HCT116 (cell line): ENCODE measurements at regions of chr20 and their contacts with region 1.

Region 1: DNA sequence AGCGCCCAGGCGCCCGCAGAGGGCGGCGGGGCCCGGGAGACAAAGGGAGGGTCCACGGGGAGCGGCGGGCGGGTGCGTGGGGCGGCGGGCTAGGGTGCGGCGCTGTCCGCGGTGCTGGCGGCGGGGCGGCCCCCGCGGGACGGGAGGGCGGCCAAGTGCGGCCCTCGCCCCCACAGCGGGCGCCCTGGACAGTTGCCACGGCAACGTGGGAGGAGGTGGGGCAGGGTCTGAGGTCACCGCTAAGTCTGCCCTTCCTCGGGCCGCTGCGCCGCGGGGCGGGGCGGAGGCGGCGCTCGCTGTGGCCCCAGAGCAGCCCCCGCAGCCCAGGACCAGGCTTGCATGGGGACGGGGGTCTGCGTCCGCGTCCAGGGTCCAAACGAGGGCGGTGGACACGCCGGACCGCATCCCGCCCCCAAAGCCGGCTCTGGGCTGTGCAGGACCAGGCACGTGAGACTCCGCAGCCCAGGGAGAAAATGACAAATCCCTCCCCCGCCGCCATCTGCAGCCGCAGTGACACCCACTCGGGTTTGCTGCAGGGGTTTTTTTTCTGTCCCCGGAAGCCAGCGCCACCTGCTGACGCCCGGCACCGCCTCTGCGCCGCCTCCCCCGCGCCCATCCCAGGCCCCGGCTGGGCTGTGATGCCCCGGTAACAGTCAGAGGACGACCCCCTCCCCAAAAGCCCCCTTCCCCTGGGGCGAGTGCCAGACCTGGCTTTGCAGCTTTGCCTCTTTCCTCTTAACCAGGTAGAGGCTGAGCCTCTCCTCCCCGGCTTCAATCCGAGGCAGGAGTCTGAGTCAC is 36.8 kb downstream of the YTHDF1 start:
- DNase-seq: peak; percentile 18
- ATAC-seq: peak; percentile 81
- H3K4me3 ChIP-seq: peak overlapping the region in 1 of 2 experiments; percentile 13; a peak in 3 of 4 replicates
- H3K27ac ChIP-seq: no peak overlapping the region; the same call in 1 of the 2 replicates
- H3K4me1 ChIP-seq: peaks cover 2 to 10% of the 10 kb centered on the region in 2 experiments; a peak in 3 of 4 replicates
- H3K27me3 ChIP-seq: no peaks in the 10 kb centered on the region
- CTCF ChIP-seq: peak; percentile 51 to 68 (median 62); a peak in 5 of 6 replicates
- POLR2A ChIP-seq: no peak
- RAD21 ChIP-seq: peak; percentile 70

Region 2: GRCh38 chr20:62875419-62876361 is 303.4 kb before region 1 on chr20:
- CTCF ChIA-PET with region 1: no interaction called
- POLR2A ChIA-PET with region 1: no interaction called
- RAD21 ChIA-PET with region 1: no interaction called
- intact Hi-C with region 1: no loop called
- DNase-seq: peak; percentile 71
- ATAC-seq: peak; percentile 92
- H3K4me3 ChIP-seq: peak overlapping the region; percentile 18 to 30; a peak in 3 of 4 replicates
- H3K27ac ChIP-seq: peak overlapping the region; percentile 77
- H3K4me1 ChIP-seq: peaks cover 13 to 26% of the 10 kb centered on the region in 2 experiments
- H3K27me3 ChIP-seq: no peaks in the 10 kb centered on the region
- CTCF ChIP-seq: peak; percentile 54 to 59 (median 56); a peak in 5 of 6 replicates
- POLR2A ChIP-seq: no peak
- RAD21 ChIP-seq: peak; percentile 35; the same call in 1 of the 2 replicates

Region 3: GRCh38 chr20:62953839-62954703 is 225.0 kb before region 1 on chr20:
- CTCF ChIA-PET with region 1: no interaction called
- POLR2A ChIA-PET with region 1: no interaction called
- RAD21 ChIA-PET with region 1: no interaction called
- intact Hi-C with region 1: no loop called
- DNase-seq: no peak
- ATAC-seq: no peak
- H3K4me3 ChIP-seq: peak overlapping the region; percentile 62 to 77
- H3K27ac ChIP-seq: peak overlapping the region; percentile 53; the same call in 1 of the 2 replicates
- H3K4me1 ChIP-seq: peaks cover 9 to 24% of the 10 kb centered on the region in 2 experiments
- H3K27me3 ChIP-seq: no peaks in the 10 kb centered on the region
- CTCF ChIP-seq: no peak
- POLR2A ChIP-seq: no peak
- RAD21 ChIP-seq: no peak

Region 4: GRCh38 chr20:62972270-62973032 is 206.6 kb before region 1 on chr20:
- CTCF ChIA-PET with region 1: interaction called, 11 read pairs
- POLR2A ChIA-PET with region 1: no interaction called
- RAD21 ChIA-PET with region 1: interaction called in 1 of 2 experiments, 4 read pairs
- intact Hi-C with region 1: no loop called
- DNase-seq: peak; percentile 63
- ATAC-seq: peak; percentile 95
- H3K4me3 ChIP-seq: peak overlapping the region; percentile 35 to 47
- H3K27ac ChIP-seq: no peak overlapping the region; the same call in 1 of the 2 replicates
- H3K4me1 ChIP-seq: peaks cover 7 to 12% of the 10 kb centered on the region in 2 experiments; a peak in 3 of 4 replicates
- H3K27me3 ChIP-seq: no peaks in the 10 kb centered on the region
- CTCF ChIP-seq: peak; percentile 86 to 91 (median 90)
- POLR2A ChIP-seq: no peak
- RAD21 ChIP-seq: peak; percentile 97

Region 5: DNA sequence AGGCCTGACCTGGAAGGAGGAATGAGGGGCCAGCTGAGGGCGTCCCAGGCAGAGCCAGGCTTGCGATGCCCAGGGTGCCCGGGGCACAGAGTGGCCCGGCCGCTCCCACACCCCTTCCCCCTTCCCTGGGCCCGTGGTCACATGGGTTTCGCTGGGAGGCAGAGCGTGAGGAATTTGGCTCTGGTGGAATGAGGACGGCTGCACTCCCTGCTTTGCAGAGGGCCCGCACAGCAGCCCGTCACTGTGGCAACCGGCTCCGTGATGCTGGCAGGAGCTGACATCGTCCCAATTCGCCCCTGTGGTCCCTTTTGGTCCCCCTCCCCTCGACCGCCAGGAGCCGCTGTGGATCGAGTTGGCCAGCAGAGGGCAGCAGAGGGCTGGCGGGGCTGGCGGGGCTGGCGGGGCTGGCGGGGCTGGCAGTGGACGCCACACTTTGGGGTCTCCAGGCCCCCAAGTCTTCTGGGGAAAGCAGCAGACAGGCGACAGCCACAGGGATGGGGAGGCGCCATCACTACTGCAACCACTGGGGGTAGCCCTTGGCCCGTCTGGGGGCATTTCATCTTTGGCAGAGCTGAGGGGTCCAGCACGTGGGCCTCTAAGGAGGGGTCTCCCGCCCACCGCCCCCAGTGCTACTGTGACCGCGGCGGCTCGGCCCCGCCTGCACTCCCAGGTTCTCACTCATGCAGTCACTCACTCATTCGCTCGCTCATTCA is 122.7 kb before region 1 on chr20:
- CTCF ChIA-PET with region 1: interaction called, 3 read pairs
- POLR2A ChIA-PET with region 1: no interaction called
- RAD21 ChIA-PET with region 1: no interaction called
- intact Hi-C with region 1: loop called (anchors 2 kb)
- DNase-seq: no peak
- ATAC-seq: peak; percentile 79
- H3K4me3 ChIP-seq: no peak overlapping the region
- H3K27ac ChIP-seq: no peak overlapping the region
- H3K4me1 ChIP-seq: 0 out of 4 replicates have a peak, but pooled peaks cover 0 to 3% of the 10 kb centered on the region in 2 experiments
- H3K27me3 ChIP-seq: peaks cover 12% of the 10 kb centered on the region; the same call in 1 of the 2 replicates
- CTCF ChIP-seq: peak; percentile 85 to 90 (median 86)
- POLR2A ChIP-seq: no peak
- RAD21 ChIP-seq: peak; percentile 79

Region 6: DNA sequence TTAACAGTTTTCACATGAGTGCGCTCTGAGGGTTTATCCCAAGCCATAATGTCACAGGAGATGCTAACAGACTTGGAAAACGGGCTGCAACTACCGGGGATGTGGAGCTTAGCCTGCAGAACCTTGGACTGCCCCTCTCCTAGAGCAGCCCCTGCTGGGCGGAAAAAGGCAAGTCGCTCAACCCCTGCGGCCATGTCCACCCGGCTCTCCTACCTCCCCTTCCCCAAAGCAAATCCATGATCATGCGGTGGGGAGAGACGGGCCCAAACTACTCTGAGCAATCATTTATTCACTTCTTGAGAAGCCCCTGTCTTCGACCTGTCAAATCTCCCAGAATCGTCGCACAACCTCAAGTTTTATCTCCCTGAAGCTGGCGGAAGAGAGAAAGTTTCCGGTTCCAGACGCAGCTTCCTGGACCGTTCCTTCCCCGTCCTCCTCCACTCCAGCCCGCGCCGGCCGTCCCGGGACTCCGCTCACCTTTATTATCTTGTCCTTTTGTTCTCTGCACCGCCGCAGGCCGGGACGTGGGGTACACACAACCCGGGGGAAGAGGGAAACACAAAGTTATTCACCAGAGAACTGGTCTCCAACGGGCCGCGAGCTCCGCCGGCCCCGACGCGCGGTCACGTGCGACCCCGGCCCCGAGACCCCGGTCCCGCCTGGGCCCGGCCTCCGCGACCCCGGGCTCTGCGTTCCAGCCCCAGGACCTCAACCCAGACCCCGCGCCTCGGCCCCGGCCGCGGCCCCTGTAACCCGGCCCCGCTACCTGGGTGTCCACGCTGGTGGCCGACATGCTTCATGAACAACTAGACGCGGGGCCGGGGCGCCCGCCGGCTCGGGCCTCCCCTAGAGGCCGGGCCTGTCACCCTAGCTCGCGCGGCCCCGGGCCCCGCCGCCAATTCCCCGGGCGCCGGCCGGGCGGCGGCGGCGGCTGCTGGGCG is 36.3 kb after region 1 on chr20:
- CTCF ChIA-PET with region 1: interaction called, 3 read pairs
- POLR2A ChIA-PET with region 1: no interaction called
- RAD21 ChIA-PET with region 1: no interaction called
- intact Hi-C with region 1: loop called (anchors 1 kb)
- DNase-seq: no peak
- ATAC-seq: peak; percentile 35
- H3K4me3 ChIP-seq: peak overlapping the region; percentile 90 to 95
- H3K27ac ChIP-seq: peak overlapping the region; percentile 87
- H3K4me1 ChIP-seq: peaks cover 14 to 21% of the 10 kb centered on the region in 2 experiments
- H3K27me3 ChIP-seq: no peaks in the 10 kb centered on the region
- CTCF ChIP-seq: peak; percentile 49 to 70 (median 64); a peak in 5 of 6 replicates
- POLR2A ChIP-seq: no peak
- RAD21 ChIP-seq: peak; percentile 70

Region 7: GRCh38 chr20:63253438-63254236 is 74.5 kb after region 1 on chr20:
- CTCF ChIA-PET with region 1: no interaction called
- POLR2A ChIA-PET with region 1: no interaction called
- RAD21 ChIA-PET with region 1: no interaction called
- intact Hi-C with region 1: no loop called
- DNase-seq: no peak
- ATAC-seq: no peak
- H3K4me3 ChIP-seq: no peak overlapping the region
- H3K27ac ChIP-seq: no peak overlapping the region
- H3K4me1 ChIP-seq: no peaks in the 10 kb centered on the region
- H3K27me3 ChIP-seq: no peaks in the 10 kb centered on the region
- CTCF ChIP-seq: no peak
- POLR2A ChIP-seq: no peak
- RAD21 ChIP-seq: no peak

Region 8: DNA sequence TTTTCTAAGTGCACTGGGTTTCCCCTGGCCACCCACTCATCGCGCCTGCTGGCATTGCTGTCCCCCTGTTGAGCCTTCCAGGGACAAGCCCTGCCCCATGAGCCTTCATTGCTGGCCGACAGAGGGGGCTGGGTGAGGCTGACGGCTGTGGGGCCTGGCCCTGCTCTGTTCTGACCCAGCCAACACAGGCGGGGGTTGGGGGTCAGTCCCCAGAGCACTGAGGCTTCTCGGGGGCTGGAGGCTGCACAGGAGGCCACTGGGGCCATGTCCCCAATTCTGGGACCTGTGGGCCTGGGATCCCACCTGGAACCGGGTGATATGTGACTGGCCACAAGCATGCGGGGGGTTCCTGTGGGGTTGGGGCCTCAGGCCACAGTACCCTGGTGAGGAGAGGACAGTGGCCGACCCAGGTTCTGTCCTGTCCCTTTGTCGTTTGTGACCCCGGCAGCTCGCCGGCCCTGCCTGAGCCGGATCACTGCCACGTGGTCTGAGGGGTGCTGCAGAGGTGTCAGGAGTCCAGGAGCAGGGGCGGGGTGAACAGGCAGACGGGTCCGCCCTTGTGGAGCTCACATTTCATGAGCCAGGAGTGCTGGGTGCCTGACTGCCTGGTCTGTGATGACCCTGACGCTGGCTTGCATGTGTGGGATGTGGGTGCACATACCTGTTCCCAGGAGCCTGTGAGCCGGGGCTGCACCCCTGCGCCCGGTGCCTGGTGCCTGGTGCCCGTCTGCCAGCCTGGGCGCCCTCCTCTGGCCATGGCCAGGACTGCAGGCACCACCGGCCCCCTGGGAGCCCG is 111.8 kb after region 1 on chr20:
- CTCF ChIA-PET with region 1: no interaction called
- POLR2A ChIA-PET with region 1: no interaction called
- RAD21 ChIA-PET with region 1: no interaction called
- intact Hi-C with region 1: loop called (anchors 1 kb)
- DNase-seq: peak; percentile 13
- ATAC-seq: peak; percentile 84
- H3K4me3 ChIP-seq: no peak overlapping the region
- H3K27ac ChIP-seq: no peak overlapping the region; the same call in 1 of the 2 replicates
- H3K4me1 ChIP-seq: peaks cover 4 to 18% of the 10 kb centered on the region in 2 experiments; a peak in 3 of 4 replicates
- H3K27me3 ChIP-seq: no peaks in the 10 kb centered on the region
- CTCF ChIP-seq: peak; percentile 50 to 84 (median 62); a peak in 5 of 6 replicates
- POLR2A ChIP-seq: no peak
- RAD21 ChIP-seq: peak; percentile 57